Activated T-helper 1 cell treated with anti-CD3 and anti-CD28 coated beads, Interleukin-12 subunit alpha, Interleukin-12 subunit beta, Interleukin-2, Interleukin-4 antibody, amounts not matched to agents 30 ng/mL and 10 ng/mL and 1 ng/mL, durations not matched to agents 14 hours and 24 hours and 36 hours (primary cell): ENCODE measurements at regions of chr7 and their contacts with region 1.

Region 1: DNA sequence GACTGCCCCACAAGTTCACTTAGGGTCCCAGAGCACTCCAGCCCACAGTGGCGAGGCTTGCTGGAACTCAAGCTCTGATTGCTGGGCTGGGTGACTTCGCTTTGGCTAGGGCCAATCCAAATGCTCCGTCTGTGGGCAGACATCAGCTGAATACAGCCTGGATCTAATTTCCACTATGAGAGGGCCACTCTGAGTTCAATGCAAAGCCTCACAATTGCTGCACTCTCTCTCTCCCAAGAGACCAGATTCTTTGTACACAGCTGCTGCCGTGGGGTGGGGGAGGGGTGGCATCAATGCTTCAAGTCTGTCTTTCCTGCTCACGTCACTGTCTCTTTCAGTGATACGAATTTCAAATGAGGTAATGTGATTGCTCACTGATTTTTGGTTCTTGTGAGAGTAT is 47.3 kb upstream of the BPGM start:
- DNase-seq: no peak
- H3K4me3 Mint-ChIP-seq: no peak overlapping the region
- H3K27ac Mint-ChIP-seq: no peak overlapping the region
- H3K4me1 Mint-ChIP-seq: no peaks in the 10 kb centered on the region
- H3K27me3 Mint-ChIP-seq: peaks cover 7% of the 10 kb centered on the region

Region 2: DNA sequence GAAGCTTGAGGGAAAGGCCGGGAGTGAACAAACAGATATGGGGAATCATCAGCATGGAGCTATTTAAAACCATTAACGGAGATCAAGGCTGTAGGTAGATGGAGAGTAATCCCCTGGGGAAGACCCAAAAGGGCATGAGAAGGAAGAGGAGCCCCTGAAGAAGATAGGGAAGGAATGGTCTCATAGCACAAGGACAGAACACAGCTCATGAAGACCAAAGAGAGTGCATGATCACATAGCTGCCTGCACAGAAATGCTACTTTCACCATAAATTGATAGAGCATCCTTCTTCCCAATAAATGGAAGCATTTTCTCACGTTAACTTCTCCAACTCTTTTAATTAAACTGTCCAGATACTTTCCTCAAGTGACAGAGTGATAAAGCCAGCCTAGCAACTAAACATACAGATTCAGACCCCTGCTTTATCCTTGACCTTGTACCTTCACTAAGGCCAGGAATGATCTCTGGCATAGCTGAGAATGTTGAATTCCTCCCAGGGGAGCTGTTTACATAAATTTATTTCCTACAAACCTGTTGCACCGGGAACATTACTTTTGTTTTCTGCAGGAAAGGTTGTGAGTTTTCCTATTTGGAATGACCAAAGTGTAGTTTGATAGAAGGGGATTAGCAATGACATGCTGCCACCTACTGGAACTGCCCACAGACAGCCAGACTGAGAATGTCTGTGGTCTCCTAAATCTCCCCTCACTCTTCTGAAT is 583.0 kb before region 1 on chr7:
- intact Hi-C with region 1: loop called (anchors 5 kb)
- DNase-seq: no peak
- H3K4me3 Mint-ChIP-seq: no peak overlapping the region
- H3K27ac Mint-ChIP-seq: no peak overlapping the region
- H3K4me1 Mint-ChIP-seq: no peaks in the 10 kb centered on the region
- H3K27me3 Mint-ChIP-seq: no peaks in the 10 kb centered on the region

Region 3: DNA sequence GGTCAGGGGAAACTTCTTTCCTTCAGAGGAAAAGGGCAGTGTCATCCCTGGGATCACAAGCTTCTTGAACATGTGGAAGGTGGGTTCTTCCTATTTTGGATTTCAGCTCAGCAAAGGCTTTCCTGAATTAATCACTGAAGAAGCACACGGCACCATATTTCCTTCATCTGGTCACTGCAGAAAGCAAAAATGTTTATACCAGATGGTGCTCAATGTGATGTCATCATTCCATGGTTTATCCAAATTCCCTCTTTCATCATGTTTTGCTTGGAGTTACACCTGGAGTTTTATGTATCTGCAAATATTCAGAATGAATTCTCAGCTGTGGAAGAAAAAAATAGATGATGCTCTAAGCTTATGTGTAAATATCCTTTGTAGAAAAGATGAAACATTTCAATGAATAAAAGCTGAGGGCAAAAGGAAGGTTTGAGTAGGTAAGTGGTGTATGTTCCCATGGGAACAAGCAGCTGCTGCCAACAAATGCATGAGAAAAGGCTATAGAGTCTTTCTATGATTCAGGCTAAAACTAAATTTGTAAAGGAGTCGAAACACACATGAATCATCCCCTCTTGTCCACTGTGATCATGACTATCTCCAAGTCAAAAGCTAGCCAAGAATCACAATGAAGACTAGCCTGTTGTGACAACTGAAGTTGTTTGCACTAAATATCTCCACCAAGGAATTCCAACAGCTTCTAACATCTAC is 20.4 kb after region 1 on chr7:
- intact Hi-C with region 1: no loop called
- DNase-seq: no peak
- H3K4me3 Mint-ChIP-seq: no peak overlapping the region
- H3K27ac Mint-ChIP-seq: no peak overlapping the region
- H3K4me1 Mint-ChIP-seq: no peaks in the 10 kb centered on the region
- H3K27me3 Mint-ChIP-seq: peaks cover 23% of the 10 kb centered on the region